ENCODE measurements at regions of chr11 and their contacts with region 1.

Region 1: GRCh38 chr11:67239783-67240575 is 26.3 kb upstream of the GRK2 start:
- DNase-seq: peak; percentile 80
- ATAC-seq: peak; percentile 92
- H3K4me3 Mint-ChIP-seq: peak overlapping the region; percentile 99
- H3K27ac Mint-ChIP-seq: peak overlapping the region; percentile 96
- H3K4me1 Mint-ChIP-seq: peaks cover 48% of the 10 kb centered on the region
- H3K27me3 Mint-ChIP-seq: no peaks in the 10 kb centered on the region
- CTCF ChIP-seq: no peak

Region 2: GRCh38 chr11:66744485-66745340 is 495.3 kb before region 1 on chr11:
- CTCF ChIA-PET with region 1: no interaction called
- POLR2A ChIA-PET with region 1: no interaction called
- intact Hi-C with region 1: no loop called
- DNase-seq: peak; percentile 95
- ATAC-seq: peak; percentile 90
- H3K4me3 Mint-ChIP-seq: peak overlapping the region; percentile 96
- H3K27ac Mint-ChIP-seq: peak overlapping the region; percentile 89
- H3K4me1 Mint-ChIP-seq: peaks cover 26% of the 10 kb centered on the region
- H3K27me3 Mint-ChIP-seq: no peaks in the 10 kb centered on the region
- CTCF ChIP-seq: no peak

Region 3: DNA sequence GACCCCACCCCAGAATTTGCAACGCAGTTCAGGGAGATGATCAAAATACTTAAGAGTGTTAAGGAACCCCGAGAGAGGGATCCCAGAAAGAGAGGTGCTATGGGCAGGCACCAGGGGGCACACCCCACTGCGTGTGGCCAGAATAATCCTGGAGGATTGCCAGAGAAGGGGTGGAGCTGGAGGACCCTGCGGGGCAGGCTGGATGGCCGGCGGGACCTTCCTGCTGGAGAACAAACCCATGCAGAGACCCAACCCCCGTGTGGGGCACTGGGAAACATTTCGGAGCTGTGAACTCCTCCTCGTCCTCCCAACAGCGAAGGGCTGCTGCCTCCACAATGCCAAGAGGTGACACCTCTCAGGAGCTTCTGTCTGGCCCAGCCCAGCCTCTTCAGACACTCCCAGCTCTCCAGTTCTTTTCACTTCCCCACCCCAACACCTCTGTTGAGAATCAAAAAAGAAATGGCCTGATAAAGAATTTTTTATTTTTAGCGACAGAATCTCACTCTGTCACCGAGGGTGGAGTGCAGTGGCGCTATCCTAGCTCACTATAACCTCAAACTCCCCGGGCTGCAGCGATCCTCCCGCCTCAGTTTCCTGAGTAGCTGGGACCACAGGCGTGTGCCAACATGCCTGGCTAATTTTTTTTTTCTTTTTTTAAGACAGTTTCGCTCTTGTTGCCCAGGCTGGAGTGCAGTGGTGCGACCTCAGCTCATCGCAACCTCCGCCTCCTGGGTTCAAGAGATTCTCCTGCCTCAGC is 157.8 kb before region 1 on chr11:
- CTCF ChIA-PET with region 1: interaction called, 5 read pairs
- POLR2A ChIA-PET with region 1: interaction called, 3 read pairs
- intact Hi-C with region 1: loop called (anchors 1 kb)
- DNase-seq: no peak
- ATAC-seq: no peak
- H3K4me3 Mint-ChIP-seq: peak overlapping the region; percentile 41
- H3K27ac Mint-ChIP-seq: no peak overlapping the region
- H3K4me1 Mint-ChIP-seq: peaks cover 14% of the 10 kb centered on the region
- H3K27me3 Mint-ChIP-seq: peaks cover 10% of the 10 kb centered on the region
- CTCF ChIP-seq: no peak

Region 4: DNA sequence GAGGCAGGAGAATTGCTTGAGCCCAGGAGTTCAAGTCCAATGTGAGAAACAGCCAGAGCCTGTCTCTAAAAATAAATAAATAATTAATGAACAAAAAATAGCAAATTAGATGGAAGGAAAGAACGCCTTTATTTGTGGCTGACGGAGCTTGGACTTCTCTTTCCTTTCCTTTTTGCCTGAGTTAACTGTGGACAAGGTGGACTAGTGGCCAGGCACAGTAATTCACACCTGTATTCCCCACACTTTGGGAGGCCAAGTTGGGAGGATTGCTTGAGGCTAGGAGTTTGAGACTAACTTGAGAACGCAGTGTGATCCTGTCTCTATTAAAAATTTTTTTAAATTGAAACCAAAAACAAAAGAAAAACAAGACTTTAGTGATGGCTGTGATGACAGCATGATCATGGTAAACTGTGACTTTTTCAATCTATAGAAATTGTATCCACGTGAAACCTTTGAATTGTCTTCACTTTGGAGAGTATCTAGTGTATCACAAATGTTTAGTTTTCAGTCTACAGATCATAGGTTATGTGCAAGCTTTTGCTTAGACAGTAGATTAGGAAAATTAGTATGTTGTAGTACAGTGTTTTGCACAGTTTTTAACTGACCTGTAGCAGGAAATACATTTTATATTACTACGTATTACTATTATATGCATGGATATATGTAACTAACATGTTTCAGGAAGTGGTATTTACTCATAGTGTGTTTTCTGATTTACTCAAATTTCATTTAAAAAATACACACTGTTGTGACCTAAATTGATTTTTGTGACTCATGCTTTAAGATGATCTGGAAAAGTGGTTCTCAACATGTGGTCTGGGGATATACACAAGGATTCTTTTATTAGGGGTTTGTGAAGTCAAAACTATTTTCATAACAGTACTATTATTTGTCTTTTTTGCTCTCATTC is 78.8 kb before region 1 on chr11:
- CTCF ChIA-PET with region 1: no interaction called
- POLR2A ChIA-PET with region 1: no interaction called
- intact Hi-C with region 1: loop called (anchors 10 kb)
- DNase-seq: no peak
- ATAC-seq: no peak
- H3K4me3 Mint-ChIP-seq: no peak overlapping the region
- H3K27ac Mint-ChIP-seq: peak overlapping the region; percentile 7
- H3K4me1 Mint-ChIP-seq: peaks cover 32% of the 10 kb centered on the region
- H3K27me3 Mint-ChIP-seq: no peaks in the 10 kb centered on the region
- CTCF ChIP-seq: no peak

Region 5: GRCh38 chr11:67252831-67253239 is 12.9 kb after region 1 on chr11:
- CTCF ChIA-PET with region 1: interaction called, 4 read pairs
- POLR2A ChIA-PET with region 1: interaction called, 19 read pairs
- intact Hi-C with region 1: no loop called
- DNase-seq: no peak
- ATAC-seq: peak; percentile 75
- H3K4me3 Mint-ChIP-seq: no peak overlapping the region
- H3K27ac Mint-ChIP-seq: no peak overlapping the region
- H3K4me1 Mint-ChIP-seq: peaks cover 8% of the 10 kb centered on the region
- H3K27me3 Mint-ChIP-seq: no peaks in the 10 kb centered on the region
- CTCF ChIP-seq: no peak

Region 6: GRCh38 chr11:67277231-67277961 is 37.4 kb after region 1 on chr11:
- CTCF ChIA-PET with region 1: no interaction called
- POLR2A ChIA-PET with region 1: interaction called, 18 read pairs
- intact Hi-C with region 1: no loop called
- DNase-seq: peak; percentile 85
- ATAC-seq: peak; percentile 93
- H3K4me3 Mint-ChIP-seq: peak overlapping the region; percentile 59
- H3K27ac Mint-ChIP-seq: peak overlapping the region; percentile 98
- H3K4me1 Mint-ChIP-seq: peaks cover 85% of the 10 kb centered on the region
- H3K27me3 Mint-ChIP-seq: no peaks in the 10 kb centered on the region
- CTCF ChIP-seq: no peak

Region 7: DNA sequence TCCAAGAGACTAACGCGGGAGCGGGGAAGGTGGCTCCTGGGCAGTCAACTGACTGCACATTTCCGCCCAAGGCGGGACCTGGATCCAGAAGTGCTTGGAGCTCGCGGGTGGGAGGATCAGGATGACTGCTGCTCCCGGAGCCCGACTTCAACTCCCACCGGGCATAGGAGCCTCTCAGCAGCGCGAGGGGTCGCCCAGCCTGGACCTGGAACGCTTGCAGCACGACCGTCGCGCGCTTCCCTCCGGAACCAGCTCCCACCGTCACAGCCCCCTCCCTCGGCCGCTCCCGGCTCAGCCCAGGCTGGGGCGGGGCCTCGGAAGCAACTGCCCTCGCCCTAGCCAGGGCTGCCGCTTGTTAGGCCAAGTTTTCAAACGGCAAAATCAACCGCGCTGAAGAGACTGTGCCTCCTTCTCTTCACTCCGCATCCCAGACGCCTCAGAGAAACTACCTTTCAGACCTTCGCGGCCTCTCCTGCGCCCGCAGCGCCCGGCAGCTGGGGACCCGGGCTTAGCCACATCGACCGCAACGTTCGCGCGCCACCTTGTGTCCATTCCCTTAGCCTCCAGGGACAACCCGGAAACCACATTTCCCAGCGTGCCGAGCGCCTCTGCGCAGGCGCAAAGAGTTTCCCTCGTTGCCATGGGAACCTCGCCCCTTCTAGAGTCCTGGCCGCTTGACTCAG is 77.4 kb after region 1 on chr11:
- CTCF ChIA-PET with region 1: interaction called, 8 read pairs
- POLR2A ChIA-PET with region 1: interaction called, 17 read pairs
- intact Hi-C with region 1: loop called (anchors 1 kb)
- DNase-seq: peak; percentile 96
- ATAC-seq: peak; percentile 82
- H3K4me3 Mint-ChIP-seq: peak overlapping the region; percentile 98
- H3K27ac Mint-ChIP-seq: peak overlapping the region; percentile 98
- H3K4me1 Mint-ChIP-seq: peaks cover 23% of the 10 kb centered on the region
- H3K27me3 Mint-ChIP-seq: no peaks in the 10 kb centered on the region
- CTCF ChIP-seq: no peak

Region 8: DNA sequence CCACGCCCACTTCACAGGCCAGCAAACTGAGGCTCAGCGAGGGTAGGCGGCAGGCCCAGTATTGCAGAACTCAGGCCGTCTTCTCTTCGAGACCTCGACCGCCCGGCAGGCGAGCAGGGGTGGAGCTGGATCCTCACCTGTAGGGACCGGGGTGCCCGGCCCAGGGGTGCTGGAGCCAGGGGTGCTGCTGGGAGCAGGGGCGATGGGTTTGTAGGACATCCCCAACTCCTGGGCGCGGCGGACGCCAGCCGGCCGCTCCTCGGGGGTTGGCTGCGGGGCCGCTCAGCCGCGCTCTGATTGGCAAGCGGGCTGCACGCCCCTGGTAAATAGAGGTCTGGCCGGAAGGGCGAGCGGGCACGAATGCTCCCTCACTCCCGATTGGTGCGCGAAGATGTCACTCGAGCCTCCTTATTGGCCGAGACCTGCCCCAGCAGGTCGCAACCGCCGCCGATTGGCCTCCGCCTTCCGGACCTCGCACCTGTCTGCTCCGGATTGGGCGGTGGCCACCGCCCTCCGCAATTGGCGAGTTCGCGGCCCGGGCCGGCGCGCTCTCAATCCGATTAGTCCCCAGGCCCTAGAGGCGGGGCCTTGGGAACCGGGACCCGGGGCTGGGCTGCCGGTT is 268.0 kb after region 1 on chr11 and contains the start of gene CDK2AP2:
- CTCF ChIA-PET with region 1: no interaction called
- POLR2A ChIA-PET with region 1: interaction called, 3 read pairs
- intact Hi-C with region 1: loop called (anchors 1 kb)
- DNase-seq: peak; percentile 90
- ATAC-seq: peak; percentile 77
- H3K4me3 Mint-ChIP-seq: peak within 1 kb of the TSS; percentile 88
- H3K27ac Mint-ChIP-seq: peak within 1 kb of the TSS; percentile 94
- H3K4me1 Mint-ChIP-seq: peaks cover 42% of the 10 kb centered on the region
- H3K27me3 Mint-ChIP-seq: no peaks in the 10 kb centered on the region
- CTCF ChIP-seq: no peak
- total RNA-seq, gene CDK2AP2: 67.1 and 68.5 TPM in 2 replicates

Measured in activated B cell treated with CpG ODN at 0.5 μM for 24 hours (primary cell).